ENCODE measurements at regions of chr7 and their contacts with region 1.

Region 1: DNA sequence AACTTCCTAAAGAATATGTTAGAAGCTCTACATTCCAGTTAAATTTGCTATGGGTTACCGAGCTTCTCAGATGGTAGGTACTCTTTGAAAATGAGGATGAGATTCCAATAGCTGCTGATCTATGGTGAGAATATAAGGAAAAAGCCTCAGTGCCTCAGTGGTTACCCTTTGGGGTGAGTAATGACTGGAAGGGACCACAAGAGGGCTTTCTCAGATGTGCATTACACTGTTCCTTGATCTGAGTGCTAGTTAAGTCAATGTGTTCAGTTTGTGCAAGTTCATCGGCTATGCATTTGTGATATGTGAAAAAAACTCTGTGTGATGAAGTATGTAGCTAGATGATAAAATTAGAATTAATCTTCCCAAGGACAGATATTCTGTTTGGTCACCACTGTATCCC is 3.5 kb downstream of the NRCAM start:
- DNase-seq: peak; percentile 69
- H3K4me3 ChIP-seq: no peak overlapping the region
- H3K27ac ChIP-seq: peak overlapping the region; percentile 59
- H3K4me1 ChIP-seq: peaks cover 49% of the 10 kb centered on the region
- H3K27me3 ChIP-seq: no peaks in the 10 kb centered on the region
- CTCF ChIP-seq: peak; percentile 49 to 69
- POLR2A ChIP-seq: no peak

Region 2: DNA sequence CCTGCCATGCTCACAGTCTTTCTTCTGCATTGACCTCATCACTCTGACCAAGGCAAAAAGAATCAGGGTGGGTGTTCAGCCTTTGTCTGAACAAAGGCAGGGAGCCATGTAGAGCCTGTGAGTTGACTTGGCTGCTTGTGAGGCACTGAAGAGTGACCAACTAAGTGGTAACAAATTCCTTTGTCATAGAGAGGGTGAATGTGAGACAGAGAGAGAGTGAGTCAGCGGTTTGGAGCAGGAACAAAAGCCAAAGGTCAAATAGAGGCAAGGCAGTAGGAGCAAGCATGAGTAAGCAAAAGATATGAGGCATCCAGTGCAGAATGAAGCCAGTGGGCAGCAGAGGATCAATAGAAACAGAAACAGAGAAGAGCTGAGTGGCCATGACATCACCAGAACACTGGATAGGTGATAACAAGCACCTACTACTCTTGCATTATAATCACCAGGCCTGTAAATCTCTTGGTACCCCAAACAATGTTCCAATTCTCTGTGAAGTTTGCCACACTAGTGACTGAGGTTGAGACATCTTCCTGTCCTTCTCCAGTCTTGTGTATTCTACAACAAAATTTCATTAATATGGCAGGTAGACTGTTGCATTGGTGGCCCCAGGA is 206.4 kb before region 1 on chr7:
- CTCF ChIA-PET with region 1: interaction called, 4 read pairs
- POLR2A ChIA-PET with region 1: no interaction called
- dilution Hi-C with region 1: no loop called
- intact Hi-C with region 1: loop called (anchors 2 kb)
- DNase-seq: peak; percentile 91
- H3K4me3 ChIP-seq: no peak overlapping the region
- H3K27ac ChIP-seq: peak overlapping the region; percentile 79
- H3K4me1 ChIP-seq: peaks cover 30% of the 10 kb centered on the region
- H3K27me3 ChIP-seq: no peaks in the 10 kb centered on the region
- CTCF ChIP-seq: no peak
- POLR2A ChIP-seq: peak; percentile 57

Region 3: GRCh38 chr7:108415821-108416536 is 36.7 kb before region 1 on chr7:
- CTCF ChIA-PET with region 1: interaction called, 20 read pairs
- POLR2A ChIA-PET with region 1: no interaction called
- dilution Hi-C with region 1: no loop called
- intact Hi-C with region 1: loop called (anchors 1 kb)
- DNase-seq: peak; percentile 77
- H3K4me3 ChIP-seq: no peak overlapping the region
- H3K27ac ChIP-seq: peak overlapping the region; percentile 88
- H3K4me1 ChIP-seq: peaks cover 65% of the 10 kb centered on the region
- H3K27me3 ChIP-seq: no peaks in the 10 kb centered on the region
- CTCF ChIP-seq: no peak
- POLR2A ChIP-seq: no peak

Region 4: GRCh38 chr7:108468246-108468645 is 15.5 kb after region 1 on chr7:
- CTCF ChIA-PET with region 1: interaction called, 10 read pairs
- POLR2A ChIA-PET with region 1: interaction called, 3 read pairs
- dilution Hi-C with region 1: no loop called
- intact Hi-C with region 1: no loop called
- DNase-seq: no peak
- H3K4me3 ChIP-seq: no peak overlapping the region
- H3K27ac ChIP-seq: no peak overlapping the region
- H3K4me1 ChIP-seq: peaks cover 2% of the 10 kb centered on the region
- H3K27me3 ChIP-seq: no peaks in the 10 kb centered on the region
- CTCF ChIP-seq: no peak
- POLR2A ChIP-seq: no peak

Measured in endothelial cell of umbilical vein (primary cell).